A549 (cell line): ENCODE measurements at regions of chr5 and their contacts with region 1.

Region 1: DNA sequence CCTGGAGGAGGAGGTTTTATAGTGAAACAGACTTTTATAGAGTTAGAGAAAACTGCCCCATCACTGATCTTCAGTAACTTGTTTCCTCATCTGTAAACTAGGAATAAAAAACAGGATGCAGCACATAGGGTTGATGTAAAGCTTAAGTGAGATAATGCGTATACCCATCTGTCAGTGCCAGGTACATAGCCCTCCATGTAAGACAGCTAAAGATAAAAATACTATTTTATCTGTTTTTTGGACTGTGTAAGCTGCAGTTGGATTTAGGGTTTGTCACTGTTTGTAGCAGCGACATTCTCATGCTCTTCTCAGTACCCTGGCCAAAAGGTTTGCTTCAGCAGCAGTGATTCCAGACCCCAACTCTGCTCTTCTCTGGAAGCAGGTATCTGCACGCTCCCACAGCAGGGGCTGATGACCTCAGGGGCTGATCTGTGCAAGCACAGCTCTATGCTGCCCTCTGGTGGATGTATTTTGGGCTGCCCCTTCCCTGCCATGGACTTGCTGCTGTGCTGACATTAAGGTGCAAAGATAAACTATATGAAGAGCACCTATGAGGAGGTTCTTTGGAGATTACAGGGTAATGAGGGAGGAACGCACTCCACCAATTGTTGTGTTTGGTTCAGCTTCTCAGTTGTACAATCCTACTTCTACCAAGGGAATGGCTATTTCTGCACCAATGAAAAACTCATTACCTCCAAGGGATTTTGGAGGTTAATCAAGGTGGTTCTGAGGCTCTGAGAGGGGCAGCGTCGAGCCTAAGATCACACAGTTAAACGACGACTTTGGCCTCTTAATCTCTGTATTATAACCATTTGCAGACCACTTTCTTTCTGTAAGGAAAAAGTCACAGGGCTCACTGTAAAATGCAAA is 13.1 kb downstream of the HMHB1 start:
- DNase-seq: peak; percentile 69 to 89
- ATAC-seq: peak; percentile 98 to 99
- H3K4me3 ChIP-seq: no peak overlapping the region
- H3K27ac ChIP-seq: peak overlapping the region; percentile 80 to 84
- H3K4me1 ChIP-seq: peaks cover 45% of the 10 kb centered on the region
- CTCF ChIP-seq: peak; percentile 95
- EP300 ChIP-seq: no peak
- POLR2A ChIP-seq: no peak
- RAD21 ChIP-seq: peak; percentile 99 to 100

Region 2: DNA sequence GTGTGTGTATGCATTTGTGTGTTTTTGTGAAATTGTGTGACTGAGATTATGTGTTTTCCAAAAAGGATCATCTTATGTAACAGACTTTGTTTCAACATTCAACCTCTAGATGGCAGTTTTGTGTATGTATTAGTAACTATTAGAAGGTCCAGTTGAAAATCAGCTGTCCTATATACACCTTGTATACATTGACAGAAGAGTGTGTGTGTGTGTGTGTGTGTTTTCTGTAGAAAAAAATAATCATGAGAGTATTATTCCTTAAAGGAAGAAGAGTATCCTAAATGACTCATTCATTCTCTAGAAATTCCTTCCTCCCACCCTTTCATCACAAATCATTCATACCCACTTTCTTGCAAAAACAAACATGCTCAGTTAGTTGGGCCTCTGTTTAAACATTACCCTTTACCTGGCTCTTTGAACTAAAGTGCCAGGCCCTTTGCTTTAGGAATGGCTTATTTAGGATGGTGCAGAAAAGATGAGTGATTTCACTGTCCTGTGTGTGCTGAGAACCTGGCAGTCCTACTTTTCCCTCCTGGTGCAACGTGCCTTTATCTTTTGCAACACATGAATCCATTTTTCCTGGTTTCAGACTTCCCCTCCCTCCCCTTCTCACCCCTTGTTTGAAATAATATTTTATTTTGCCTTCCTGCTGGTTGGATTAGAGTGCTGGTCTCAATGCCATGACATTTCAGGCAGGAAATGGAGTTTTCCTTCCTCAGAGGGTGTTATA is 902.7 kb before region 1 on chr5:
- CTCF ChIA-PET with region 1: interaction called, 18 read pairs
- POLR2A ChIA-PET with region 1: no interaction called
- DNase-seq: peak; percentile 38 to 76
- ATAC-seq: peak; percentile 72 to 77
- H3K4me3 ChIP-seq: no peak overlapping the region
- H3K27ac ChIP-seq: peak overlapping the region; percentile 51 to 70
- H3K4me1 ChIP-seq: peaks cover 58% of the 10 kb centered on the region
- CTCF ChIP-seq: peak; percentile 75
- EP300 ChIP-seq: peak; percentile 49 to 67; a peak in 1 of 5 replicates
- POLR2A ChIP-seq: no peak
- RAD21 ChIP-seq: peak; percentile 80 to 88

Region 3: DNA sequence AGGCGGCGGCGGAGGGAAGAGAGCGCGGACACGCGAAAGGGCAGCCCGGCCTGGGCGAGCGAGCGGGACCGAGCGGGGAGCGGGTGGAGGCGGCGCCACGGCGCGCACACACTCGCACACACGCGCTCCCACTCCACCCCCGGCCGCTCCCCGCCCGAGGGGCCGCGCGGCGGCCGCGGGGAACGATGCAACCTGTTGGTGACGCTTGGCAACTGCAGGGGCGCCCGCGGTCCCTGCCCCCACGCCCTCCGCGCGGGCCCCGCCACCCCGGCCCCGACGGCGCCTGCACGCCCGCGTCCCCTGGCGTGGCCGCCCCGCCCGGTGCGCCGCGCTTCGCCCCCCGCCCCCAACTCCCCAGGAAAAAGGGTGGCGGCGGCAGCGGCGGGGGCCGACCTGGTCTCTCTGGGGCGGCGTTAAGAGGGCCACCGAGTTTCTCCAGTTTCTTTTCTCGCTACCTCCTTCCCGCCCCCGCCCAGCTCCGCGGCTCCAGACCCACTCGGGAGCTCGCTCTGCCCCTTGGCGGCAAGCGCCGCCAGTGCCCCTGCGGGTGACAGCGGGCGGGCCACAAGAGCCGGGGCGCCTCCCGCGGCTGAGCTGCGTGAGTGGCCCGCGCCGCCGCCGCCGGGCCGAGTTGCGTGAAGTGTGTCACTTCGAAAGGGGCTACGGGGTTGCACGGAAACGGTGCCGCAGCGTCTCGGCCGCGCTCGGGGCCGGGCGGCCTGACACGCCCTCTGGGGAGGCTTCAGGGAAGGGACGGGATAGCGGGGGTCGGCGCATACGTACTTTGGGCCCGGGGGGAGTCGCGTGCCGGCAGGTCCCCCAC is 421.3 kb before region 1 on chr5 and contains the start of gene NR3C1:
- CTCF ChIA-PET with region 1: interaction called, 26 read pairs
- POLR2A ChIA-PET with region 1: interaction called, 3 read pairs
- DNase-seq: peak; percentile 50 to 87
- ATAC-seq: peak; percentile 63 to 66
- H3K4me3 ChIP-seq: peak within 1 kb of the TSS; percentile 86
- H3K27ac ChIP-seq: peak within 1 kb of the TSS; percentile 96 to 99
- H3K4me1 ChIP-seq: no peaks in the 10 kb centered on the region
- CTCF ChIP-seq: peak; percentile 63
- EP300 ChIP-seq: peak in 1 of 2 experiments; percentile 34; a peak in 1 of 5 replicates
- POLR2A ChIP-seq: peak; percentile 52
- RAD21 ChIP-seq: peak; percentile 42 to 77
- polyA plus RNA-seq, gene NR3C1: 73.0 and 79.5 TPM in 2 replicates

Region 4: GRCh38 chr5:143506881-143507551 is 318.1 kb before region 1 on chr5:
- CTCF ChIA-PET with region 1: interaction called, 17 read pairs
- POLR2A ChIA-PET with region 1: no interaction called
- DNase-seq: peak; percentile 65 to 96
- ATAC-seq: peak; percentile 94 to 97
- H3K4me3 ChIP-seq: peak overlapping the region; percentile 16; the same call in 1 of the 3 replicates
- H3K27ac ChIP-seq: peak overlapping the region; percentile 96
- H3K4me1 ChIP-seq: peaks cover 50% of the 10 kb centered on the region
- CTCF ChIP-seq: peak; percentile 35; the same call in 2 of the 3 replicates
- EP300 ChIP-seq: peak; percentile 84 to 94; a peak in 3 of 5 replicates
- POLR2A ChIP-seq: no peak
- RAD21 ChIP-seq: peak; percentile 65 to 76; a peak in 4 of 5 replicates

Region 5: DNA sequence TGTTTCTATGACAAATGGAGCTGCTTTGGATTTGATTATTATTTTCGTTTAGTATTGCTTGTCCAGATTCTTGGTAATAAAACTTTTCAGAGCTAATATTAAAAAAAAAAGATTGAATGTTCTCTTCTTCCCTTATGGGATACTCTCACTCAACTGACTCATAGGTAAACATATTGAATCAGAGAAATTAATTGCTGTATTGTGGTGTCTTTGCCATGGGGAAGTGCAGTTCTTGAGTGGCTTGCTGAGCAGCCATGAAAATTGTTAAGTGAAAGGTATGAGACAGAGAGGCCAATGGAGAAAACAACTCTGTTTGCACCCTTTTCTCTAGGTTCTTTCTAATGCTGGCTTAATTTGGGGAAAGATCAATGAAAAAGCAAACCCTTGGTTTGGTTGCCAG is 163.1 kb before region 1 on chr5:
- CTCF ChIA-PET with region 1: no interaction called
- POLR2A ChIA-PET with region 1: no interaction called
- DNase-seq: no peak
- ATAC-seq: no peak
- H3K4me3 ChIP-seq: no peak overlapping the region
- H3K27ac ChIP-seq: peak overlapping the region; percentile 16 to 69; a peak in 4 of 6 replicates
- H3K4me1 ChIP-seq: peaks cover 61% of the 10 kb centered on the region
- CTCF ChIP-seq: no peak
- EP300 ChIP-seq: no peak
- POLR2A ChIP-seq: no peak
- RAD21 ChIP-seq: no peak

Region 6: DNA sequence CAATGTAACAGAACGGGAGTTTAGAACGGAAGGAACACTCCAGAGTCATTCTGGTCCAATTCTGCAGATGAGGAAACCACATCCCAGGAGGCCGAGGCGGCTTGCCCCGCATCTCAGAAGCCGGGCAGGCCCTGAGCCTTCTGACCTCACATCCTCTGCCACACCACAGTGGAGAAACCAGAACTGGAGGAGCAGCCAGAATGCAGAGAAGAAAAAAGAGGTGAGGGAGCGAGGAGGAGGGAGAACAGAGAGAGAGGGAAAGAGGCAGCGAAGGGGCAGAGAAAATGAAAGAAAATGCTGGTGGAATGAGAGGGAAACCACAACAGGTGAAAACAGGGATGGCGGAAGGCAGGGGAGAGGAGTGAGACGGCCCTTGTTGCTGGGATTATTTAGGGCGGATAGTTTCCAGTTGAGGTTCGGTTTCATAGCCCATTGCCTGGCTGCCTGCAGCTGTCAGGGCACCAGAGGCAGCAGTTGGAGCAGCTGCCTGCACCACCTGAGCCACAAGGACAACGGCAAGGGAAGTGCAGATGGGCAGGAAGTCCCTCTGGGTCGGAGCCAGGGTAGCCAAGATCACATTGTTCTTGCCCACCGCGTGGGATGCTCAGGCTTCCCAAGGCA is 12.9 kb before region 1 on chr5 and contains the start of gene HMHB1:
- CTCF ChIA-PET with region 1: interaction called, 10 read pairs
- POLR2A ChIA-PET with region 1: no interaction called
- DNase-seq: no peak
- ATAC-seq: 0 out of 6 replicates have a peak, but pooled peaks of 1 of the 2 experiments have one; percentile 19
- H3K4me3 ChIP-seq: no peak within 1 kb of the TSS
- H3K27ac ChIP-seq: peak within 1 kb of the TSS in 1 of 2 experiments; percentile 26; a peak in 2 of 6 replicates
- H3K4me1 ChIP-seq: no peaks in the 10 kb centered on the region
- CTCF ChIP-seq: no peak
- EP300 ChIP-seq: no peak
- POLR2A ChIP-seq: no peak
- RAD21 ChIP-seq: no peak
- polyA plus RNA-seq, gene HMHB1: not detected in 2 replicates

Region 7: DNA sequence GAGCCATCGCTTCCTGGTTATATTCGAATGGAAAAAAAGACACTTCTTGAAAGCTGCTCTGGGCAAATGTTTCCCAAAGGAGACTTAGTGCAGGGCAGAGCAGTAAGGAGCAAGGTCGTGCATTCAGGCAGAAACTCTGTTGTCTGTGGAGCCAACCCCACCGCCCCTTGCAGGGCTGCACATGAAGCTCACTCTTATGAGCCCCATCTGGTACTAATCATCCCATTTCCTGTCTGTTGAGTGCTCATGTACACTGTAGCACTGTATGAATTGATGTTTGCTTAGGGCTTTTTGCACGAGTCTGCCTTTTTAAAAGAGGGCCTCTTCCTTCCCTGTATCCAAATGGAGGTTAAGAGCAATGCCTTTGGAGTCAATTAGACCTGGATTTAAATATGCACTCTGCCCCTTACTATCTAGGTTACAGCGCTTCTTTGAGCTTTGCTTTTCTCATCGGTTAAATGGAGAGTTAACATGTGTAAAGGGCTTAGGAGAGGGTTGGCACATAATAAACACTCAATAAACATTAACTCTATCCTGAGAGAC is 12.3 kb after region 1 on chr5:
- CTCF ChIA-PET with region 1: interaction called, 14 read pairs
- POLR2A ChIA-PET with region 1: no interaction called
- DNase-seq: no peak
- ATAC-seq: no peak
- H3K4me3 ChIP-seq: no peak overlapping the region
- H3K27ac ChIP-seq: no peak overlapping the region
- H3K4me1 ChIP-seq: no peaks in the 10 kb centered on the region
- CTCF ChIP-seq: no peak
- EP300 ChIP-seq: no peak
- POLR2A ChIP-seq: no peak
- RAD21 ChIP-seq: no peak

Region 8: GRCh38 chr5:143968011-143968878 is 143.2 kb after region 1 on chr5:
- CTCF ChIA-PET with region 1: interaction called, 16 read pairs
- POLR2A ChIA-PET with region 1: no interaction called
- DNase-seq: peak; percentile 31 to 75
- ATAC-seq: peak; percentile 75 to 87; a peak in 4 of 6 replicates
- H3K4me3 ChIP-seq: no peak overlapping the region
- H3K27ac ChIP-seq: peak overlapping the region; percentile 48 to 63
- H3K4me1 ChIP-seq: peaks cover 31% of the 10 kb centered on the region
- CTCF ChIP-seq: peak; percentile 68
- EP300 ChIP-seq: no peak
- POLR2A ChIP-seq: no peak
- RAD21 ChIP-seq: peak; percentile 86 to 90